Activated CD4-positive, alpha-beta memory T cell treated with anti-CD3 and anti-CD28 coated beads for 36 hours (primary cell): ENCODE measurements at regions of chr5 and their contacts with region 1.

Region 1: GRCh38 chr5:43066799-43067741 is 27.0 kb upstream of the ANXA2R start:
- DNase-seq: peak; percentile 92
- H3K4me3 Mint-ChIP-seq: peak overlapping the region; percentile 96
- H3K27ac Mint-ChIP-seq: peak overlapping the region; percentile 99
- H3K4me1 Mint-ChIP-seq: peaks cover 37% of the 10 kb centered on the region
- H3K27me3 Mint-ChIP-seq: no peaks in the 10 kb centered on the region

Region 2: DNA sequence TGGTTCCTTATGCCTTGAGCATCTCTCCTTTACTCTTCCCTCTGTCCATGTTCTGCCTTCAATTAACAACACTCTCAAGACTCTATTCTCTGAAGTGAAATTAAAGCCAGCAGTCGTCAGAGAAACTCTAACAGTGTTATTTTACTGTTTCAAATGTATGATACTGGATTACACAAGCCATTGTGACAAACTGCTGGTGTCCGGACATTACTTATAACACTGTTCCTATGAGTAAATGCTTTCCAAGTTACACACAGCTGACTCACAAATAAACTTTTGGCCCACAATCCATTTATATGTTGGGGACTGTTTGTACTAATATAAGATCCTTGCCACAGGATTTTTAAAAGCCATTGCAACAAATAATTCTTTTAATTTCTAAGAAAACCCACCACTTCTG is 707.0 kb before region 1 on chr5:
- CTCF ChIA-PET with region 1: no interaction called
- POLR2A ChIA-PET with region 1: no interaction called
- intact Hi-C with region 1: no loop called
- DNase-seq: no peak
- H3K4me3 Mint-ChIP-seq: no peak overlapping the region
- H3K27ac Mint-ChIP-seq: no peak overlapping the region
- H3K4me1 Mint-ChIP-seq: no peaks in the 10 kb centered on the region
- H3K27me3 Mint-ChIP-seq: no peaks in the 10 kb centered on the region

Region 3: DNA sequence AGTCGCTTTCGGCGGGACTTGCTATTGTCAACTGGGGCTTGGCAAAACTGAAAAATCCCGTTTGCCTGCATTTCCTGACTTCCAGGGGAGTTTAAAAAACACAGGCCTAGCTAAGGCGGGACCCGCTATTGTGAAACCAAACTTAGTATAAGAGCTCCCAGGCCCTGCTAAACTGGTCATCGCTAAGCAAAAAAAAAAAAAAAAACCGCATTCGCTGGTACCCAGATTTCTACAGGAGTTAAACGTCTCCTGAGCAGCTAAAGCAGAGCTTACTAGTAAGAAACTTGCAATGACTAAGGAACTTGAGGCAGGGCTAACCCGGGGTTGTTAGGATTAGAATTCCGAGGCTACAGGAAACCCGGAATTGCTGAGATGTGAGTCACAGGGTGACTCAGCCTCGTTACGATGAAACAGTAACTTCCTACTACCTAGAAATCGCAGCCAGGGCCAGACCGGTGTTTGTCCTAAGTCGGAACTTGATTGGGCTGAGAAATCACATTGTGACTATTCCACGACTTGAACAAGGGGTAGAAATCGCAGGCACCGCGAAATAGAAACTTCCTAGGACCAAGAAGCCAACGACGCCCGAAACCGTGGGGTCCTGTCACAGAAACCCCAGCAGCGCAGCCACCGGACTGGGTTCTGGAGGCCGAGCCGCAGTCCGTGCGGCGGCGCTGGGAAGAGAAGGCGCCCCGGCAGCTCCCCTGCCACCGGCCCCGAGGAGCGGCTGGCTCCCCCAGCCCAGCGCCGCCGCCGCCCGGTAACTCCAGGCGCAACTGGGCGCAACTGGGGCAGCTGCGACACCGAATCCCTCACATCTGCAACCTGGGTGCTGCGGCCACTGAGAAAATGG is 116.4 kb before region 1 on chr5:
- CTCF ChIA-PET with region 1: interaction called, 8 read pairs
- POLR2A ChIA-PET with region 1: interaction called, 9 read pairs
- intact Hi-C with region 1: loop called (anchors 1 kb)
- DNase-seq: peak; percentile 86
- H3K4me3 Mint-ChIP-seq: peak overlapping the region; percentile 94
- H3K27ac Mint-ChIP-seq: peak overlapping the region; percentile 97
- H3K4me1 Mint-ChIP-seq: peaks cover 30% of the 10 kb centered on the region
- H3K27me3 Mint-ChIP-seq: no peaks in the 10 kb centered on the region

Region 4: GRCh38 chr5:43019614-43020293 is 47.3 kb before region 1 on chr5:
- CTCF ChIA-PET with region 1: interaction called, 10 read pairs
- POLR2A ChIA-PET with region 1: interaction called, 24 read pairs
- intact Hi-C with region 1: loop called (anchors 1 kb)
- DNase-seq: peak; percentile 91
- H3K4me3 Mint-ChIP-seq: peak overlapping the region; percentile 97
- H3K27ac Mint-ChIP-seq: peak overlapping the region; percentile 98
- H3K4me1 Mint-ChIP-seq: peaks cover 32% of the 10 kb centered on the region
- H3K27me3 Mint-ChIP-seq: no peaks in the 10 kb centered on the region

Region 5: GRCh38 chr5:43191740-43192557 is 124.9 kb after region 1 on chr5 and contains the start of gene NIM1K:
- CTCF ChIA-PET with region 1: interaction called, 3 read pairs
- POLR2A ChIA-PET with region 1: no interaction called
- intact Hi-C with region 1: loop called (anchors 1 kb)
- DNase-seq: peak; percentile 62
- H3K4me3 Mint-ChIP-seq: peak within 1 kb of the TSS; percentile 78
- H3K27ac Mint-ChIP-seq: no peak within 1 kb of the TSS
- H3K4me1 Mint-ChIP-seq: peaks cover 31% of the 10 kb centered on the region
- H3K27me3 Mint-ChIP-seq: peaks cover 16% of the 10 kb centered on the region
- total RNA-seq, gene NIM1K: 0.75 to 1.00 TPM

Region 6: GRCh38 chr5:43514816-43515677 is 448.0 kb after region 1 on chr5 and contains the start of gene C5orf34:
- CTCF ChIA-PET with region 1: no interaction called
- POLR2A ChIA-PET with region 1: no interaction called
- intact Hi-C with region 1: loop called (anchors 10 kb)
- DNase-seq: peak; percentile 97
- H3K4me3 Mint-ChIP-seq: peak within 1 kb of the TSS; percentile 95
- H3K27ac Mint-ChIP-seq: peak within 1 kb of the TSS; percentile 99
- H3K4me1 Mint-ChIP-seq: peaks cover 26% of the 10 kb centered on the region
- H3K27me3 Mint-ChIP-seq: no peaks in the 10 kb centered on the region
- total RNA-seq, gene C5orf34: 11.8 to 13.1 TPM

Region 7: DNA sequence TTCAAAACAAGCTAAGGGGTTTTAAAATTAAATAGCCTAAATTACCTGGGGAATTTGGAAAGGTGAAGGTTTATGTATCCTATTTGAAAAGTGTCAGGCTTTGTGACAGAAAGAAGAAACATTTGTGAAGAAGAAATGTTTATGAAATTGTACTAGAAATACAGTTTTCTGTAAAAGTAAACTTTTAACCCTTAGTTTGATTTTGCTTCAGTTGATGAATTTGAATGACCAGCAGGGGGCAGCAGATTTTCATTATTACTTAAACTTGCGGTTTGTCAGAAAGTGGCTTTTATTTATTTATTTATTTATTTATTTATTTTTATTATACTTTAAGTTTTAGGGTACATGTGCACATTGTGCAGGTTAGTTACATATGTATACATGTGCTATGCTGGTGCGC is 594.0 kb after region 1 on chr5:
- CTCF ChIA-PET with region 1: no interaction called
- POLR2A ChIA-PET with region 1: no interaction called
- intact Hi-C with region 1: no loop called
- DNase-seq: no peak
- H3K4me3 Mint-ChIP-seq: no peak overlapping the region
- H3K27ac Mint-ChIP-seq: no peak overlapping the region
- H3K4me1 Mint-ChIP-seq: no peaks in the 10 kb centered on the region
- H3K27me3 Mint-ChIP-seq: no peaks in the 10 kb centered on the region